GM10248 (cell line): ENCODE measurements at regions of chr15 and their contacts with region 1.

Region 1: DNA sequence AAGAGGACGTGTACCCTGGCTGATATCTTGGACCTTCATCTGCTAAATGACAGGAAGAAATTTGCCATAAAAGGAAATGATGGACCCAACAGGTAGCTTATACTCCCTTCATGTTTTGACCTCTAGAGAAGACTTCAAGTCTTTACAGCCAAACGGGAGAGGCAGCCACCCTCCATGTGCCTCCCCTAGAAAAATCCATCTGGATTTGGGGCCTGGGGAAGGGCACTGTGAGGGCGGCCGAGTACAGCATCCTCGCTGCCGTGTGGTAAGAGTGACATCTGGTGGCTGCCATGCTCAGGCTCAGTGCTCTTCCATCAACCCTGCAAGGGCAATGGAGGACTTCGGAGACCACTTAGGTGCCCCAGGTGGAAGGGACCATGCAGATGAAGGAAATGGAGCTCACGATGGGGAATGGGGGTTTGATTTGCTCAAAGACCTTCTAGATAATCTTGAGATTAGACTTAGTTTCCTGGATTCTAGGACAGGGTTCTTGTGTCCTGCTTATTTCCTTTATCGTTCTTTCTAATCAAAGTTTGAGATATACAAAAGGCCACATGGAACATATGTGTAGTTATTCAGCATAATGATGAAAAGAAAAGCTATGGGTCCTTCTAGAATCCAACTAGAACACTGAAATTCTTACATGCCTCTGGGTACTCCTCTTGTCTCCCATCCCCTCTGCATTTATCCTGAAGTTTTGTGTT is 44.4 kb downstream of the AQP9 start:
- DNase-seq: peak; percentile 60
- CTCF ChIP-seq: peak; percentile 80

Region 2: GRCh38 chr15:58077427-58077826 is 105.2 kb before region 1 on chr15:
- CTCF ChIA-PET with region 1: interaction called, 22 read pairs
- POLR2A ChIA-PET with region 1: no interaction called
- DNase-seq: peak; percentile 9
- CTCF ChIP-seq: no peak

Region 3: DNA sequence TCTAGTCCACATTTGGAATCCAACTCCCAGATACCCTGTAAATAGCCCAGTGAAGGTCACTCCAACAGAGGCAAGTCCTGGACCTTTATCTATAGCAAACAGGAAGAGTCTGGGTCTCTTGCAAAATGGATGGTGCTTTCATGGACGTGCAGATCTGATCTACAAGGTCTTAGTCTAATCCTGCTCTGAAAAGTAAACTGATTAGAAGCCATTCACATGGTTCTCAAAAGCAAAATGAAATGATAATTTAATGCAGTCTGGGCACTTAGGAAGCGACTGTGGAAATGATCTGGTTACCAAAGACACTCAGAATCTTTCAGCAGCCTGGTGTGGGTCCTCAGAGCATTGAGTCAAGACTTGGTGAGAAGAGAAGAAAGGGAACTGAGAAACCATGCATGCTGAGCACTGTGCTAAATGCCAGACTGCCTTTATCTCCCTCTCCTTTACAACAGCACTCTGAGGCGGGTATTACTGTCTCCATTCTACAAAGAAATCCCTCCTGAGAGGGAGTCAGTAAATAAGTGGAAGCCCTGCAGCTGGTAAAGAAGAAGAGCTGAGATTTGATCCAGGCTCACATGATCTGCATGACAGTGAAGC is 15.4 kb before region 1 on chr15:
- CTCF ChIA-PET with region 1: interaction called, 24 read pairs
- POLR2A ChIA-PET with region 1: no interaction called
- DNase-seq: peak; percentile 17
- CTCF ChIP-seq: no peak

Region 4: GRCh38 chr15:58309963-58310928 is 127.6 kb after region 1 on chr15:
- CTCF ChIA-PET with region 1: no interaction called
- POLR2A ChIA-PET with region 1: no interaction called
- DNase-seq: no peak
- CTCF ChIP-seq: no peak